Naive thymus-derived CD8-positive, alpha-beta T cell (primary cell): ENCODE measurements at regions of chr6 and their contacts with region 1.

Region 1: GRCh38 chr6:79078075-79079025 is at the start of gene PHIP:
- DNase-seq: peak; percentile 85 to 99 (median 92)
- ATAC-seq: peak; percentile 79 to 84
- H3K4me3 Mint-ChIP-seq: peak within 1 kb of the TSS; percentile 89 to 97 (median 94)
- H3K27ac Mint-ChIP-seq: peak within 1 kb of the TSS; percentile 94 to 99 (median 97)
- H3K4me1 Mint-ChIP-seq: peaks cover 9 to 49% (median 27%) of the 10 kb centered on the region in 4 donors
- H3K27me3 Mint-ChIP-seq: peaks cover 7 to 22% (median 11%) of the 10 kb centered on the region in 5 donors
- polyA plus RNA-seq, gene PHIP: 8.6 to 11.9 (median 9.0) TPM

Region 2: GRCh38 chr6:79042088-79042798 is 36.1 kb before region 1 on chr6:
- POLR2A ChIA-PET with region 1: interaction called, 12 read pairs
- DNase-seq: peak in 1 of 10 donors; percentile 14
- ATAC-seq: peak in 1 of 2 donors; percentile 23
- H3K4me3 Mint-ChIP-seq: peak overlapping the region in 1 of 10 donors; percentile 14
- H3K27ac Mint-ChIP-seq: no peak overlapping the region
- H3K4me1 Mint-ChIP-seq: peaks cover 28 to 60% (median 53%) of the 10 kb centered on the region in 4 donors
- H3K27me3 Mint-ChIP-seq: no peaks in the 10 kb centered on the region

Region 3: DNA sequence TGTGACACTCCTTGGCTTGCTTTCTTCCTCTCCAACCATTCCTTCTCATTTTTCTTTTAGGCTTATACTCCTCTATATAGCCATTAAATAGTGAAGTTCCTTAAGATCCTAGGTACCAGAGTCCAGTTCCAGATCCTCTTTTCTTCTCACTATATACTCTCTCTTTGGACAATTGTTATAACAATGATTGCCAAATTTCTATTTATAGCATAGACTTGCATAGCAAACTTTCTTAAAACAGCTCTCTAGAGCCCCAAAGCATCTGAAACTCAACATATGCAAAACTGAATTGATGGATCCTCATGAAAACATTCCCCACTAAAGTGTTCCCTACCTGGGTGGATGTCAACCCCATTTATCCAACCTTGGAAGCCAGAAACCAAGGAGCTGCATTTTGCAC is 13.7 kb before region 1 on chr6:
- POLR2A ChIA-PET with region 1: interaction called, 17 read pairs
- DNase-seq: no peak
- ATAC-seq: no peak
- H3K4me3 Mint-ChIP-seq: no peak overlapping the region
- H3K27ac Mint-ChIP-seq: no peak overlapping the region
- H3K4me1 Mint-ChIP-seq: peaks cover 7 to 22% (median 14%) of the 10 kb centered on the region in 4 donors
- H3K27me3 Mint-ChIP-seq: no peaks in the 10 kb centered on the region

Region 4: GRCh38 chr6:79127660-79128059 is 49.3 kb after region 1 on chr6:
- POLR2A ChIA-PET with region 1: no interaction called
- DNase-seq: no peak
- ATAC-seq: no peak
- H3K4me3 Mint-ChIP-seq: no peak overlapping the region
- H3K27ac Mint-ChIP-seq: no peak overlapping the region
- H3K4me1 Mint-ChIP-seq: no peaks in the 10 kb centered on the region
- H3K27me3 Mint-ChIP-seq: peaks cover 0 to 22% (median 9%) of the 10 kb centered on the region in 5 donors

Region 5: GRCh38 chr6:79536954-79537747 is 458.8 kb after region 1 on chr6 and contains the start of gene LCA5:
- POLR2A ChIA-PET with region 1: interaction called, 16 read pairs
- DNase-seq: peak; percentile 69 to 94 (median 86)
- ATAC-seq: peak; percentile 95 to 96
- H3K4me3 Mint-ChIP-seq: no peak within 1 kb of the TSS
- H3K27ac Mint-ChIP-seq: peak within 1 kb of the TSS in 1 of 10 donors; percentile 14
- H3K4me1 Mint-ChIP-seq: no peaks in the 10 kb centered on the region
- H3K27me3 Mint-ChIP-seq: peaks cover 0 to 15% (median 2%) of the 10 kb centered on the region in 5 donors
- polyA plus RNA-seq, gene LCA5: 0.05 to 0.32 (median 0.08) TPM